BJ (cell line): ENCODE measurements at regions of chr16 and their contacts with region 1.

Region 1: DNA sequence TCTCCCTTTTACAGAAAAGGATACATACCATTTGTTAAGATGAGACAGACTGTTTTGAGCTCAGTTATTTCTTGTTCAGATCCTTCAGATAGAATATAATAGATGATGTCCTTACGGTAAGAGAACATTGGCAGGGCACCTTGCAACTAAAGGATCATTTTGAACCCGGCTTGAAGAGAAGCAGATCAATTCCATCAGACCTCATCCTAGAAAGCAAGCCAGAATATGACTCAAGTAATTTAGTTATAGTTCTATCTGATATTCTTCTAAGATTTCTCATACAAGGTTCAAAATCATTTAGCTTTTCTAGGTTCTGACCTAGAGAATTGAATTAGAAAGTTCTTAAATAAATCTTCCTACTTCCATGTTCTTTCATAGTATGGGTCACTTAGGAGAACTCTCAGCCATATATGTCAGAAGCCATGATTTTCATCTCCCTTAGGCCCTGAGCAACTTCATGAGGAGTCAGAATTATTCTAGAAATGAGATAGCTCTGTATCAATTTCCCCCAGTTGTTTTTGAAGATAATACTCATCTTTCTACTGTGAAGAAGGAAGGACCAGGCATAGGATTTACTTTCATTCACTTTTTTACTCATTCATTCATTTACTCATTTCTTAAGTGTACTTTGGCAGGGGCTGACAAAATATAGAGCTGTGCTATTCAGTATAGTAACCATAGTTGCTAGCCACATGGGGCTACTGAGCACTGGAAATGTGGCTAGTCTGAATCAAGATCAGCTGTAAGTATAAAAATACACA is 2.5 kb upstream of the CMTM1 start:
- DNase-seq: no peak
- H3K4me3 ChIP-seq: no peak overlapping the region
- H3K27me3 ChIP-seq: no peaks in the 10 kb centered on the region
- CTCF ChIP-seq: no peak

Region 2: DNA sequence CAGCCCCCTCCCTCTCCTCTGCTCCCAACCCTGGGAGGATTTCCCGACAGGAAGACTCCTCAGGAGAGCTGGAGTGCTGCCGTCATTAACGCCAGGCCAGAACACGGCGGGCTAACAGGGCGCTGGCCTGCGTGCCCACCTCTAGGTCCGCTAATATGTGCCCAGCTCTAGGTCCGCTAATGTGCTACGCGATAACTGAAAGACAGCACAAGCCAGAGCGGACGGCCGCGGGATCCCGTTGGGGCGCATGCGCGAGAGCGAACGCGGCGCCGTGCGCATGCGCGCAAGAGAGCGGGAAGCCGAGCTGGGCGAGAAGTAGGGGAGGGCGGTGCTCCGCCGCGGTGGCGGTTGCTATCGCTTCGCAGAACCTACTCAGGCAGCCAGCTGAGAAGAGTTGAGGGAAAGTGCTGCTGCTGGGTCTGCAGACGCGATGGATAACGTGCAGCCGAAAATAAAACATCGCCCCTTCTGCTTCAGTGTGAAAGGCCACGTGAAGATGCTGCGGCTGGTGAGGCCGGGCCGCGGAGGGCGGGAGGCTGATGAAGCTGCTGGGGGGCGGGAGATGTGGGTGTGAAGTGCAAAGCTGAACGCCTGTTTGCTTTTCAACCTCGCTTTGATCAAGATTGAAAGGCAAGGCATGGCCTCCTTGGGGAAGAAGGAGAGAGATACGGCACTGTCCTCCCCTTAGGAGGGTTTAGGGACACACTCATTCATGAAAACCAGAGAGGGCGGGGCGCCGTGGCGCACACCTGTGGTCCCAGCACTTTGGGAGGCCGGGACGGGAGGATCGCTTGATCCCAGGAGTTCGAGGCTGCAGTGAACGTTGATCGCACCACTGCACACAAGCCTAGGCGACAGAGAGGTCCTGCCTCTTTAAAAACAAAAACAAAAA is 11.2 kb before region 1 on chr16 and contains the start of gene CKLF:
- CTCF ChIA-PET with region 1: interaction called, 13 read pairs
- POLR2A ChIA-PET with region 1: interaction called, 6 read pairs
- DNase-seq: peak; percentile 47
- H3K4me3 ChIP-seq: peak within 1 kb of the TSS; percentile 60
- H3K27me3 ChIP-seq: no peaks in the 10 kb centered on the region
- CTCF ChIP-seq: no peak
- polyA plus RNA-seq, gene CKLF: 60.8 and 66.9 TPM in 2 replicates